ENCODE measurements at regions of chr5 and their contacts with region 1.

Region 1: DNA sequence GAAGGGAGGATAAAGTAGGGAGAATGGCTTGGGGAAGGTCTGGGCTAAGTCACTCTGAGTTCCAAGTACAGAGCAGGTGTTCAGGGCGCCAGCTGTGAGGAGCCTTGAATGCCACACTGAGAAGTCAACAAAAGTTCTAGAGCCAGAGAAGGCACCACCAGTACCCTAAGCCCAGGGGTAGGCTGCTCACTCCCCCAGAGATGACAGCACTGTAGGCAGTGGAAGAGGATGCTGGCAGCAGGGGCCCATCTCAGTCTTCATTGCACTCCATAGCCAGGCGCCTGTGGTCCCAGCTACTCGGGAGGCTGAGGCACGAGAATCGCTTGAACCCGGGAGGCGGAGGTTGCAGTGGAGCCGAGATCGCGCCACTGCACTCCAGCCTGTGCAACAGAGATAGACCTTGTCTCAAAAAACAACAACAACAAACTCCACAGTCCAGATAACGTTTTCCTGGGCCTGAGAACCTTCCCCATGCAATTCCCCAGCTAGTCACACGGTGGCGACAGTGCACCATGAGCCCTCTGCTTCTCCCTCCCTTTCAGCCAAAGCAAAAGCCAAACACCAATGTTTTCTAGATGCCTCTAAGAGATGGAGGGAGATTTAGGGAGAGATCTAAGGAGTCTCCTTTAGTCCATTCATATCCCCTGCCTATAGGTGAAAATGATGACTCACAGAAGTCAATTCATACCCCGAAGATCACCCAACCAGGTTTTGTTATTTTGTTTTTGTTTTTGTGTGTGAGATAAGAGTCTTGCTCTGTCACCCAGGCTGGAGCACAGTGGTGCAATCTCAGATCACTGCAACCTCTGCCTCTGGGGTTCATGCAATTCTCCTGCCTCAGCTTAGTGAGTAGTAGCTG is 19.8 kb upstream of the NSD1 start:
- DNase-seq: peak; percentile 74 to 94
- ATAC-seq: peak; percentile 75
- H3K4me3 ChIP-seq: no peak overlapping the region
- H3K27ac ChIP-seq: no peak overlapping the region
- H3K4me1 ChIP-seq: peaks cover 4% of the 10 kb centered on the region; the same call in 1 of the 3 replicates
- CTCF ChIP-seq: peak; percentile 97
- EP300 ChIP-seq: no peak
- POLR2A ChIP-seq: no peak
- RAD21 ChIP-seq: peak; percentile 95 to 99

Region 2: DNA sequence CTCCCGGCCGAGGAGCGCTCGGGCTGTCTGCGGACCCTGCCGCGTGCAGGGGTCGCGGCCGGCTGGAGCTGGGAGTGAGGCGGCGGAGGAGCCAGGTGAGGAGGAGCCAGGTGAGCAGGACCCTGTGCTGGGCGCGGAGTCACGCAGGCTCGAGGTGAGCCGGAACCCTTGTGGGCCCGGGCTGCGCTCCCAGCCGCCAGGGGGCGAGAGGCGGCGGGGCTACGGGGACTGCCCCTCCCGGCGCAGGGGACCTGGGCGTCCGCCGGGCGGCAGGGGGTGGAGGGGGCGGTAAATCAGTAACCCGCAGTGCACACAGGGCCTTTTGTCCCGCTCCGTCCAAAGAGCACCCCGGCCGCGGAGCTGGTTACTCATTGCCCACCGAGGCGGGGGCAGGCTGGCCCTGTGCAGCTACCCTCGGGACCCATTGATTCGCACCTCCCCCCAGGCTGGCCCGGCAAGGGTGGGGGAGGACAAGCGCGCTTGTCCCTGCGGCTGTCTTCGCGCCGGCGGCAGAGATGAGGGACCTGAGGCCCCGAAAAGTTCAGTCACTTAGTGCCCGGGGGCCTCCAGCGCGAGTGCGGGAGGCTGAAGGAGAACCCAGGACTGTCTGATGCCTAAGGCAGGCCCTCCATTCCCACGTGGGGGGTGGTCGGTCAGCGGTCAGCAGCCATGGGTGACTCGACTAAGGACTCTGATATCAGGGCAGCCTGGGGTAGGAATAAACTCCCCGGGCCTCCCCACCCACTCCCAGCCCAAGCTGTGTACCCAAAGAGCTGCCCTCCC is 26.7 kb before region 1 on chr5:
- CTCF ChIA-PET with region 1: interaction called, 111 read pairs
- POLR2A ChIA-PET with region 1: interaction called, 3 read pairs
- DNase-seq: peak; percentile 90 to 92
- ATAC-seq: peak; percentile 77 to 89
- H3K4me3 ChIP-seq: peak overlapping the region; percentile 51
- H3K27ac ChIP-seq: peak overlapping the region; percentile 84 to 91
- H3K4me1 ChIP-seq: peaks cover 30% of the 10 kb centered on the region
- CTCF ChIP-seq: peak; percentile 71
- EP300 ChIP-seq: no peak
- POLR2A ChIP-seq: peak; percentile 64
- RAD21 ChIP-seq: peak in 1 of 2 experiments; percentile 60; a peak in 3 of 5 replicates

Region 3: DNA sequence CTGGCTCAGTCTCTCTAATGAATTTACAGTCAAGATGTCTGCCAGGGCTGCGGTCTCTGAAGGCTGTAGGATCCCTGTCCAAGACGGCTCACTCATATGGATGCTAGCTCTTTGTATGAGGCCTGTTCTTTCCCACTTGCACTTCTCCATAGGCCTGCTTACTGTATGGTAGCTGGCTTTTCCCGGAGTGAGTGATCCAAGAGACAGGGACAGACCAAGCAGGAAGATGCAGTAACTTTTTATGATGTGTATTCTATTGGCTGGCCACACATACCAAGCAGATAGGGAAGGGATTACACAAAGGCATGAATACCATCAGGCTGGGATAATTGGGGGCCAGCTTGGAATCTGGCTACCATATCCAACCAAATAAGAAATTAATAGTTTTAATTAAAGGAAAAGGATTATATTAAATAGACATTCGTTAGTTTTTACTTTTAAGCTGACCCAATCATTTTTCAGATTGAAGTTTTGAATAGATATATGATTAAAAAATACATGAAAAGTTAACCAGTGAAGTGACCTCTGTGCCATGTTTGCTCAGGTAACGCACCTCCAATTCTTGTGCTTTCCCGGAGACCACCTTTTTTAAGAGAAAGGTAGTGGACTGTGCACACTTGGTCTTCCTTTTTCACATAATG is 40.3 kb after region 1 on chr5:
- CTCF ChIA-PET with region 1: interaction called, 12 read pairs
- POLR2A ChIA-PET with region 1: no interaction called
- DNase-seq: no peak
- ATAC-seq: 0 out of 6 replicates have a peak, but pooled peaks of 1 of the 2 experiments have one; percentile 34
- H3K4me3 ChIP-seq: no peak overlapping the region
- H3K27ac ChIP-seq: no peak overlapping the region
- H3K4me1 ChIP-seq: no peaks in the 10 kb centered on the region
- CTCF ChIP-seq: no peak
- EP300 ChIP-seq: no peak
- POLR2A ChIP-seq: no peak
- RAD21 ChIP-seq: no peak

Region 4: DNA sequence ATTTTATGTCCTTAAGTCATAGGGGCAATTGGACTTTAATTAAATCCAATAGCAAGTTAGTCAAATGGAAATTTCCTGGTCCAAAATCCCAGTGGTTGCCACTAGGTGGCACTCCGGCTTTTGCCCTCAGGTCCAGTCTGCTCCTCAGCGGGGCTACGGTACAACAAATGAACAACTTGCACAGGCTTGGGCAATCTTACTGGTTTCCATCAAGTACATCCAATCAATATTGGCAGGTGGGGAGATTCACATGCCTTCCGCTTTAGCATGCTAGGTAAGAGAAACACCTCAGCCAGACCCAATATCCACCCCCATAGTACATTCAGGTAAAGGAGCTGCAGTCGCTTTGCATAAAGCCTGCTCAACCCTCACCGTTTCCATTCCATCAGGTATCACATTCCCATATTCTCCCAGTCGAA is 204.2 kb after region 1 on chr5:
- CTCF ChIA-PET with region 1: interaction called, 40 read pairs
- POLR2A ChIA-PET with region 1: no interaction called
- DNase-seq: peak; percentile 79 to 82
- ATAC-seq: peak; percentile 51 to 76; a peak in 5 of 6 replicates
- H3K4me3 ChIP-seq: no peak overlapping the region
- H3K27ac ChIP-seq: no peak overlapping the region
- H3K4me1 ChIP-seq: peaks cover 2% of the 10 kb centered on the region; the same call in 2 of the 3 replicates
- CTCF ChIP-seq: peak; percentile 96
- EP300 ChIP-seq: no peak
- POLR2A ChIP-seq: no peak
- RAD21 ChIP-seq: peak; percentile 88 to 92

Region 5: GRCh38 chr5:177403792-177404640 is 290.2 kb after region 1 on chr5:
- CTCF ChIA-PET with region 1: interaction called, 17 read pairs
- POLR2A ChIA-PET with region 1: no interaction called
- DNase-seq: peak; percentile 87 to 95
- ATAC-seq: peak; percentile 76 to 91
- H3K4me3 ChIP-seq: peak overlapping the region; percentile 60
- H3K27ac ChIP-seq: peak overlapping the region; percentile 83 to 92
- H3K4me1 ChIP-seq: peaks cover 11% of the 10 kb centered on the region; the same call in 2 of the 3 replicates
- CTCF ChIP-seq: peak; percentile 71
- EP300 ChIP-seq: no peak
- POLR2A ChIP-seq: peak; percentile 72
- RAD21 ChIP-seq: peak; percentile 72 to 84

Measured in A549 (cell line).